Mammary epithelial cell (primary cell): ENCODE measurements at regions of chr11 and their contacts with region 1.

Region 1: GRCh38 chr11:18027475-18027874 is 14.6 kb upstream of the SERGEF start:
- DNase-seq: no peak
- H3K4me3 ChIP-seq: no peak overlapping the region
- H3K27ac ChIP-seq: no peak overlapping the region
- H3K4me1 ChIP-seq: no peaks in the 10 kb centered on the region
- H3K27me3 ChIP-seq: no peaks in the 10 kb centered on the region
- CTCF ChIP-seq: no peak

Region 2: DNA sequence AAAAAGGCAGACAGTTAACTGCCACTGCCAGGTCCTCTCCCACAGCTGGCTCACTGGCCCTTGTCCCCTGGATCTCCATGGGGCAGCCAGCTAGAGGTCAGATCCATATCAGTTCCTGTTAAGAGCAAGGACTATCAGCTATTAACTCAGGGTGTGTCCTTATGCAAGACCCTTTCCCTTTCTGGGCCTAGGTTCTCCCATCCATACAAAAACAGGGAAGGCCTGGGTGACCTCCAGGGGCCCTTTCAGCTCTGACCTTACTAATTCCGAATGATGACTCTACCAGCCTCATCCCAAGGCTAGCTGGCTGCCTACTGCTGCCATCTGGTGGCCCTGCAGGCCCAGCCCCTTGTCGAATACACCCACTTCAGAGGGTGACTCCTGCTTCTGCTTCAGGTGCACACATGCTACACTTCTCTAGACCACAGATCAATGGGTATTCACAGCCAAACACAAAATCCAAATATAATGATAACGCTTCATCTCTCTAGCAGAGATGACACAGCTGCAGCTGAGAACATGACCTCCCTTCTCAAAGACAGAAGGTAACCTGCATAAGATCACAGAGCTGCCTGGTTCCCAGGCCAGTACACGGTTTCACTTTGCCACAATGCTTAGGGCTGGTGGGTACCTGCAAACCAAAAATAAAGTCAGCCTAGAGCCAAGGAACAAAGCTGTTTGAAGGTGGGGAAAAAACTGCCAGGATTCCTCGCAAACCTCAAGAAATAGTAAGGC is 48.8 kb before region 1 on chr11:
- CTCF ChIA-PET with region 1: no interaction called
- dilution Hi-C with region 1: no loop called
- in situ Hi-C with region 1: no loop called
- intact Hi-C with region 1: no loop called
- DNase-seq: peak; percentile 39
- H3K4me3 ChIP-seq: no peak overlapping the region
- H3K27ac ChIP-seq: no peak overlapping the region
- H3K4me1 ChIP-seq: no peaks in the 10 kb centered on the region
- H3K27me3 ChIP-seq: no peaks in the 10 kb centered on the region
- CTCF ChIP-seq: peak; percentile 82 to 89

Region 3: GRCh38 chr11:18091731-18092130 is 64.3 kb after region 1 on chr11:
- CTCF ChIA-PET with region 1: no interaction called
- dilution Hi-C with region 1: loop called (anchors 5 kb)
- in situ Hi-C with region 1: no loop called
- intact Hi-C with region 1: no loop called
- DNase-seq: peak; percentile 8
- H3K4me3 ChIP-seq: no peak overlapping the region
- H3K27ac ChIP-seq: no peak overlapping the region
- H3K4me1 ChIP-seq: no peaks in the 10 kb centered on the region
- H3K27me3 ChIP-seq: no peaks in the 10 kb centered on the region
- CTCF ChIP-seq: no peak